ENCODE measurements at regions of chr1 and their contacts with region 1.

Region 1: DNA sequence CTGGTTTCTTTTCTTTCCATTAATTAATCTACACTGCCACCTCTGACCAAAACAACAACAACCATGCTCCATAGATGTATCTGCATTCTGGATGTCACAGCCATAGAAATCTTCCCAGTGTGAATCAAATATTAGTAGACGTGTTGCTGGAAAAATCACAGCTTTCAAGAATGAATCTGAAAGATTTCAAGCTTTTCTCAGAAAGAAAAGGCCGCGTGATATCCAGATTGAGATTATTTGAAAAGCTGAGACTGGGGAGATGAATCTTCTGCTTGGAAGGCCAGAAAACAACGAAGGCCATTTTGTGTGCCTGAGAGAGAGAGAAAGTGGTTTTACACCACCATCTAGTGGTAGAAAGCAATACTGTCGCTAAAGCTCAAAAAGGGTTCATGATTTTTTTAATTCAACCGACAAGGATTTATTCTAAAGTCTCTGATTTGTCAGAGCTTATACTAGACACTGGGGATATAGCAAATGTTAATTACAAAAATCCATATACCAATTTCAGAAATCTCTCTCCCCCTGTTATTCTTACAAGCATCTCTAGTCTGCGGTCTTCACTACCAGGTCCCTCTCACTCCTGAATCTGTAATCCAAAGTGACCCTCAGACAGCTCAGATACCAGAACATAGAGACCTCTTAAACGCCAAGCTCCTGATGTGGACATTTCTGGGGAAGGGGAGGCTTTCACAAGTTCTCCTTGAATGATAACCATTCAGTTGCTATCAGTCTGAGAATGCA is 87.5 kb upstream of the SGIP1 start:
- DNase-seq: peak; percentile 67 to 73 (median 72)
- H3K4me3 ChIP-seq: peak overlapping the region in 1 of 3 experiments; percentile 7
- H3K4me3 Mint-ChIP-seq: peak overlapping the region in 1 of 2 donors; percentile 48
- H3K27ac ChIP-seq: peak overlapping the region in 1 of 2 donors; percentile 60
- H3K27ac Mint-ChIP-seq: peak overlapping the region; percentile 77 to 94 (median 82)
- H3K4me1 ChIP-seq: peaks cover 13% of the 10 kb centered on the region in 2 donors
- H3K4me1 Mint-ChIP-seq: peaks cover 27% of the 10 kb centered on the region
- H3K27me3 ChIP-seq: no peaks in the 10 kb centered on the region
- H3K27me3 Mint-ChIP-seq: peaks cover 0 to 2% (median 0%) of the 10 kb centered on the region in 3 donors
- CTCF ChIP-seq: peak; percentile 81

Region 2: DNA sequence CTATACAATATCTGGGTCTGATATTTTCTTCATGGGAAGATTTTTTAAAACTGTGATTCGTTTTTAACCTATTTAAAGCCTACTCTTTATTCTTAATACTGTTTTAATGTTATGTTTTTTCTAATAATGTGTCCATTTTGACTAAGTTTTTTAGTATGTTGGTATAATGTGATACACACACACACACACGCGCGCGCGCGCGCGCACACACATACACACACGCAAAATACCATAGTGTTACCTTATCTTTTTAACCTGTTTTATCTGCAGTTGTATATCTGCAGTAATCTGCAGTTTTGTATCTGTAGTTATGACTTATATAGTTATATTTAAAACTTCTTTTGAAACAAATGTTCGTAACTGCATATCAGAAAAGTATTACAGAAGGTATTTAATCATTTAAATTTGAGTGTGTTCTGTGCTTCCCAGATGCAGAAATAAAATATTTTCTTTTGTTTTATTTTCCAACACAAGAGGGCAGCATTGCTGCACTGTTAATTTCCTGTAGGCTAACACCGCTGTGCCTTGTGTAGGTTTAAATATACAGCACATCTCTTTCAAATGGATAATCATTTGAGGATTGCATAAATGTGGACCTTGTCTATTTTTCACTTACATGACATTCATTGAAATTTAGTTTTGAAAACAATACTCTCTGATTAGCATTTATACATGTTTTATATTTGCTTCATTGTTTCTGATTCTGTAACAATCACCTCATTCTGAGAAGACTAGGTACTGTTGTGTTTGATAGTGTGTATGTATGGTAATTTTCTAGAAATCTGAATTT is 487.7 kb before region 1 on chr1:
- intact Hi-C with region 1: loop called (anchors 5 kb)
- DNase-seq: peak; percentile 30 to 59 (median 40)
- H3K4me3 ChIP-seq: no peak overlapping the region
- H3K4me3 Mint-ChIP-seq: no peak overlapping the region
- H3K27ac ChIP-seq: no peak overlapping the region
- H3K27ac Mint-ChIP-seq: no peak overlapping the region
- H3K4me1 ChIP-seq: no peaks in the 10 kb centered on the region
- H3K4me1 Mint-ChIP-seq: peaks cover 13% of the 10 kb centered on the region
- H3K27me3 ChIP-seq: no peaks in the 10 kb centered on the region
- H3K27me3 Mint-ChIP-seq: peaks cover 0 to 2% (median 0%) of the 10 kb centered on the region in 3 donors
- CTCF ChIP-seq: peak; percentile 80

Region 3: DNA sequence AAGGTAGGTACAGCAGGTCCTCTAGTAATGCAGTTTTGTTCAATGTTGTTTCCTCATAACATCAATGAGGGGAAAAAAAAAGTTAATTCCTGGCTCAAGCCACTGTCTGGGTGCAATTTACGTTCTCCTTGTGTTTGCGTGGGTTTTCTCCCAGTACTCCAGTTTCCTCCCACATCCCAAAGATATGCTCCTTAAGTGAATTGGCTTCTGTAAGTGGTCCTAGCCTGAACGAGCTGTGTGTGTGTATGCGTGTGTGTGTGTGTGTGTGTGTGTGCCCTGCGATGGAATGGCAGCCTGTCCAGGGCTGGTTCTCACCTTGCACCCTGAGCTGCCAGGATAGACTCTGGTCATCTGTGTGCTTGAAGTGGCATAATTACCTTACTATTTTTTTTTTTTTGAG is 321.8 kb before region 1 on chr1:
- intact Hi-C with region 1: no loop called
- DNase-seq: no peak
- H3K4me3 ChIP-seq: no peak overlapping the region
- H3K4me3 Mint-ChIP-seq: no peak overlapping the region
- H3K27ac ChIP-seq: no peak overlapping the region
- H3K27ac Mint-ChIP-seq: peak overlapping the region in 1 of 7 donors; percentile 64
- H3K4me1 ChIP-seq: no peaks in the 10 kb centered on the region
- H3K4me1 Mint-ChIP-seq: no peaks in the 10 kb centered on the region
- H3K27me3 ChIP-seq: no peaks in the 10 kb centered on the region
- H3K27me3 Mint-ChIP-seq: peaks cover 1 to 3% (median 2%) of the 10 kb centered on the region in 3 donors
- CTCF ChIP-seq: no peak

Region 4: DNA sequence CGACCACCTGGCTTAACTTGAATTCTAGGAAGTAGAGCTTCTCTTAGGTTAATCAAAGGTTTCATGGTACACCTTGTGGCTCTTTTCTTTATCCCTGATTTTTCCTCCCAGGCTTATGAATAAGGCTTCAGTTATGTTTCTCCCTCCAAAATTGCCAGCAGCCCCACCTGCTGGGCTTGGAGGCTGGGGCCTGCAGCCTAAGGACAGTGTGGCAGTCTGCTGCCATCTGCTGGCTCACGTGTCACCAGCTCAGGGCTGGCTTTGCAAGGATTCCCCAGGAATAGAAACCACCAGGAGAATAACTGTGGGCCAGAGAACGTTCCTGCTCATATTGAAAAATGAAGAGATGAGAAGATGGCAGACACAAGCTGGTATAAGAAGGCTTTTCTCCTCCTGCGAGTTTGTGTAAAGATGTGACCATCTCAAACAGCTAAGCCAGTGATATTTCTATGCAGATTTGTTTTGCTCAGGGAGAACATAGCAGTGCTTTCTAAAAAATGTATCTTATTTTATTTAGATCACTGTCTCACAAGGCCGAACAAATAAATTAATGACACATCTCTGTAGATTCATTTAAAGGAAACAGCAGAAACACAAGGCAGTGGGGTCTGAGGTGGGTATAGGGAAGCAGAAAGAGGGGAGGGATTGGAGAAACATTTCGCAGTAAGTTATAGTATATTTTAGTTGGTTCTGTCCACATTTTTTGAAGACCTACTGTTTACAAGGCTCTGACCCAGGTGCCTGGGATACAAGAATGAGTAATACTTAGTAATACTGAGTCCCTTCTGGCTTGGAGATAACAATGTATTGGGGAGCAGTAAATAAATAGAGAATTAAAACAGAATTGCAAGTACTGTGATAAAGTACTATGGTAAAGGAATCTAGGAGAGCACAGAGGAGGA is 203.5 kb before region 1 on chr1:
- intact Hi-C with region 1: loop called in 1 of 2 experiments (anchors 5 kb)
- DNase-seq: peak; percentile 53 to 76 (median 66)
- H3K4me3 ChIP-seq: no peak overlapping the region
- H3K4me3 Mint-ChIP-seq: no peak overlapping the region
- H3K27ac ChIP-seq: no peak overlapping the region
- H3K27ac Mint-ChIP-seq: no peak overlapping the region
- H3K4me1 ChIP-seq: no peaks in the 10 kb centered on the region
- H3K4me1 Mint-ChIP-seq: no peaks in the 10 kb centered on the region
- H3K27me3 ChIP-seq: no peaks in the 10 kb centered on the region
- H3K27me3 Mint-ChIP-seq: peaks cover 0 to 1% (median 0%) of the 10 kb centered on the region in 3 donors
- CTCF ChIP-seq: peak; percentile 96

Region 5: DNA sequence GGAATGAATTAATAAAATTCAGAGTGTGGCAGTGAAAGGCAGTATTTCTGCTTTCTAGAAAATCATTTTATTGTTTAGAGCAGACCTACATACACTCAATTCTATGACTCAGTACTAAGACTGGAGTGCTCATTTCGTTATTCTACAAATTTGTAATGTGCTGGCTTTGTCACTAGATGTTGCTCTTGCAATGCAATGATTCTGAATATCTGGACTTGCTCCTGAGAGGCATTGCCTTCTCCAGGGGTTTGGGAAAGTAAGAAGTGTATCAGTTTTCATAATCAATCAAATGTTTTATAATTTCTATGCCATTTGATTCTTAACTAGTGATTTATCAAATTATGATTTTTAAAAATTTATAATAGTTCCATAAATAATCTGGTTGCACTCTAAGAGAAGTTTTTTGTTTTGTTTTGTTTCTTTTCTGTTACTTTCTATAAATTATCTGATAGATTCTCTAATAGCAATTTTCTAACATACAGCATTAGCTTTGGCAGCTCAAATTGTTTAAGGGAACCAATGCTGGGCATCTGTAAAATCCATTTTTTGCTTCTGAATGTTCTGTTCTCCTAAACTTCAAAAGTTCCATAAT is 193.0 kb before region 1 on chr1:
- intact Hi-C with region 1: loop called in 1 of 2 experiments (anchors 5 kb)
- DNase-seq: peak; percentile 57 to 80 (median 80)
- H3K4me3 ChIP-seq: no peak overlapping the region
- H3K4me3 Mint-ChIP-seq: no peak overlapping the region
- H3K27ac ChIP-seq: no peak overlapping the region
- H3K27ac Mint-ChIP-seq: peak overlapping the region in 3 of 7 donors; percentile 5 to 63 (median 27)
- H3K4me1 ChIP-seq: peaks cover 16 to 27% of the 10 kb centered on the region in 2 donors
- H3K4me1 Mint-ChIP-seq: peaks cover 26% of the 10 kb centered on the region
- H3K27me3 ChIP-seq: no peaks in the 10 kb centered on the region
- H3K27me3 Mint-ChIP-seq: no peaks in the 10 kb centered on the region
- CTCF ChIP-seq: peak; percentile 83

Region 6: DNA sequence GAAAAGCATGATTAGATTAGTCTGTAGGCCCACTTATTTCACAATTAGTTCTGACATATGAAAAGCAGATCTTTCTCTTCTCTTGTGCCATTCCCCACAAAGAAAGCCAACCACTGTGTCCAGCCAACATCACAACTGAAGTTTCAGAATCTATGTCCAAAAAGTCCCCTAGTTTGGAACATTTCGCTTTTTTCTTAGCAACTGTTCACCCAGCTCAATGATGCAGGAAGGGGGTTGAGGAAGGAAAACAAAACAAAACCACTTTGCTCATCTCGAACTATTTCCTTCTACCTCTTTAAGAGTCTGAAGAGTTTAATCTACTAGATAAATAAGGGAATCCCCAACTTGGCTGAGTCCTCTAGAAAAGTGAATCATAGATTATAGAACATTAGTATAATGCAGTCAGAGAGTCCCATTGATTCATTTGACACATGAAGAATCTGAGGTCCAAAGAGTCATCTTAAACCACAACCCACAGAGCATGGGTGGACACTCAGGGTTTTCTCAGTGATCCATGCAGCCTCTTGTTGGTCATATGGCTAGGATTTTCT is 71.8 kb before region 1 on chr1:
- intact Hi-C with region 1: loop called in 1 of 2 experiments (anchors 5 kb)
- DNase-seq: peak; percentile 75 to 93 (median 76)
- H3K4me3 ChIP-seq: peak overlapping the region in 1 of 3 experiments; percentile 58
- H3K4me3 Mint-ChIP-seq: peak overlapping the region in 1 of 2 donors; percentile 65
- H3K27ac ChIP-seq: peak overlapping the region in 1 of 2 donors; percentile 81
- H3K27ac Mint-ChIP-seq: peak overlapping the region; percentile 84 to 96 (median 93)
- H3K4me1 ChIP-seq: peaks cover 69 to 84% of the 10 kb centered on the region in 2 donors
- H3K4me1 Mint-ChIP-seq: peaks cover 76% of the 10 kb centered on the region
- H3K27me3 ChIP-seq: no peaks in the 10 kb centered on the region
- H3K27me3 Mint-ChIP-seq: peaks cover 0 to 1% (median 0%) of the 10 kb centered on the region in 3 donors
- CTCF ChIP-seq: no peak

Region 7: DNA sequence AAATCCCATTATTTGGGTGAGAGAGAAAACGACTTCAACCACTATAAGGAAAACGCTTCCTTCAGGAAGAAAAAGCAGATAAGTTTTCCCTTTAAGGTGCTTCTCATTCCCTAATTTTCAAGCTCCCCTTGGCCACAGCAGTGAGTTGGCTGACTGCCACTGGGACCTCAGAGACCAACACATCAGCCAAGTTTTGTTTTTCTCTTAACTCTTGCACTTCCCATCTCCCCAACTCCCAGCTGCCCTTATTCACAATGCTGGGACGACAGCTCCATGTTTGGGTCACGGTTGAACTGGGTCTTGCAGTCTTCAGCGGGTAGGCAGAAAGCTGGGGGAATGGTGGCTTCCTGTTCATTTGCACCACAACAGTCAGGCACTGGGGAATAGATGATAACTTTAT is 106.4 kb after region 1 on chr1:
- intact Hi-C with region 1: no loop called
- DNase-seq: no peak
- H3K4me3 ChIP-seq: no peak overlapping the region
- H3K4me3 Mint-ChIP-seq: no peak overlapping the region
- H3K27ac ChIP-seq: no peak overlapping the region
- H3K27ac Mint-ChIP-seq: no peak overlapping the region
- H3K4me1 ChIP-seq: no peaks in the 10 kb centered on the region
- H3K4me1 Mint-ChIP-seq: no peaks in the 10 kb centered on the region
- H3K27me3 ChIP-seq: no peaks in the 10 kb centered on the region
- H3K27me3 Mint-ChIP-seq: peaks cover 0 to 2% (median 0%) of the 10 kb centered on the region in 3 donors
- CTCF ChIP-seq: no peak